Vagina (tissue), 2 donors: ENCODE measurements at regions of chr9 and their contacts with region 1.

Region 1: DNA sequence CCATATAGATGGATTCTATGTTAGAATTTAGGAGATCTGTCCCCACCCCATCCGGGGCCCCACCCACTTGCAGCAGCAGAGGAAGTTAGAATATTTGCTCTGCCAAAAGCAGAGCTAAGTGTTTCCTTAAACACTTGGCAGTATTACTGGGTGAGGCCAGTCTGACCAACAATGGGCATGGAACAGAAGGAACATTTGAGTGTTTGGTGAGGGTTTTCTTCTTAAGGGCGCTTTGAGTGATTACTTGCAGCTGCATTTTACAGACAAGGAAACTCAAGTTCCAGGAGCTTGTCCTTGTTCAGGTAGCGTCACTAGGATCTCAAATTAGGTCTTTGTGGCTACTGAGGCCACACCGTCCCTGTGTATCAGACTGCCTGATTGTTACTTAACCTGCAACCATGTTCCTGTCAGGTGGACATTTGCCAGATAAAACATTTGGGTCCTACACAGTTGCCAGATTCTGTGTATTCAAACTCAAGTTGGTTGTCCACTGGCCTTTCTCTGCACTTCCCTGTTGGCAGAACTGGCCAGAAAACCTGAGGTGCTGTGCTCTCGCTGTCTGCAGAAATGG is 59.3 kb downstream of the SLC46A2 start:
- DNase-seq: no peak
- H3K4me3 ChIP-seq: no peak overlapping the region
- H3K27ac ChIP-seq: no peak overlapping the region
- H3K4me1 ChIP-seq: peaks cover 18% of the 10 kb centered on the region
- H3K27me3 ChIP-seq: no peaks in the 10 kb centered on the region
- CTCF ChIP-seq: no peak
- POLR2A ChIP-seq: no peak

Region 2: DNA sequence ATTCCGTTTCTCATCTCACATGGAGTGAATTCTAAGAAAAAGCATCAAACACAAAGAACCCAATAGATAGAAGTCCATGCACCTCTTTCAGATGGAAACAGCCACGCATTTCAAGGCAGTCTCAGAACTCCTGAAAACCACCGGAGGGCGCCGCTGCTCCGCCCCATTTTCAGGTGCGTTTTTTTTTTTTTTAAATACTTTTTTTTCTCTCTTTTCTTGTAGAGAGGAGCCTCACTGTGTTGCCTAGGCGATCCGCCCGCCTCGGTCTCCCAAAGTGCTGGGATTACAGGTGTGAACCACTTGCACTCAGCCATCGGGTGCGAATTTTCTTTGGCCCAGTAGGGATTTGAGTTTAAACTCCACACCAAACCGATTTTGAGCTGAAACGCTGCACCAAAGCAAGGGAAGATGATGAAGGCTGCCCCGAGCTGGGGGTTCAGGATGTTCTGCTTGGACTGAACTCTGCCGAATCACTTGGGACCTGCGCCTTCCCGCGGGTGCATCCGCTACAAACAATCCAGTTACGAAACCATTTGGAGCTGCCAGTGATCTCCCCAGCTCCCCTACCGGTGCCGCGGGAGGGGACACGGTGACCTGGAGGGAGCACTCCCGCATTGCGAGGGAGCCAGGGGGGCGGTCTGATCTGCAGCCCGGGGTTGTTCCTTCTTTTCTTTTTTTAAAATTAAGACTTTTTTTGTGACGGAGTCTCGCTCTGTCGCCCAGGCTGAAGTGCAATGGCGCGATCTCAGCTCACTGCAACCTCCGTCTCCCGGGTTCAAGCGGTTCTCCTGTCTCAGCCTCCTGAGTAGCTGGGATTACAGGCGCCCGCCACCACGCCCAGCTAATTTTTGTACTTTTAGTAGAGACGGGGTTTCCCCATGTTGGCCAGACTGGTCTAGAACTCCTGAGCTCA is 1233.3 kb before region 1 on chr9:
- intact Hi-C with region 1: loop called (anchors 5 kb)
- DNase-seq: peak in 1 of 2 donors; percentile 91
- H3K4me3 ChIP-seq: peak overlapping the region; percentile 74 to 86
- H3K27ac ChIP-seq: peak overlapping the region; percentile 84
- H3K4me1 ChIP-seq: no peaks in the 10 kb centered on the region
- H3K27me3 ChIP-seq: no peaks in the 10 kb centered on the region
- CTCF ChIP-seq: peak; percentile 26 to 80 (median 28)
- POLR2A ChIP-seq: no peak